ENCODE measurements at regions of chr3 and their contacts with region 1.

Region 1: GRCh38 chr3:140922634-140923033 is 19.0 kb upstream of the SLC25A36 start:
- DNase-seq: no peak
- H3K4me3 ChIP-seq: no peak overlapping the region
- H3K27ac ChIP-seq: no peak overlapping the region
- H3K27me3 ChIP-seq: peaks cover 2% of the 10 kb centered on the region
- CTCF ChIP-seq: peak; percentile 64

Region 2: GRCh38 chr3:140910860-140911259 is 11.8 kb before region 1 on chr3:
- CTCF ChIA-PET with region 1: interaction called, 10 read pairs
- POLR2A ChIA-PET with region 1: no interaction called
- DNase-seq: no peak
- H3K4me3 ChIP-seq: no peak overlapping the region; the same call in 1 of the 2 replicates
- H3K27ac ChIP-seq: no peak overlapping the region
- H3K27me3 ChIP-seq: peaks cover 6% of the 10 kb centered on the region
- CTCF ChIP-seq: 0 out of 2 replicates have a peak, but pooled peaks have one; percentile 11

Region 3: GRCh38 chr3:140972833-140973232 is 50.2 kb after region 1 on chr3:
- CTCF ChIA-PET with region 1: interaction called, 27 read pairs
- POLR2A ChIA-PET with region 1: no interaction called
- DNase-seq: no peak
- H3K4me3 ChIP-seq: no peak overlapping the region
- H3K27ac ChIP-seq: no peak overlapping the region
- H3K27me3 ChIP-seq: no peaks in the 10 kb centered on the region
- CTCF ChIP-seq: peak; percentile 54